MCF 10A (cell line): ENCODE measurements at regions of chr20 and their contacts with region 1.

Region 1: DNA sequence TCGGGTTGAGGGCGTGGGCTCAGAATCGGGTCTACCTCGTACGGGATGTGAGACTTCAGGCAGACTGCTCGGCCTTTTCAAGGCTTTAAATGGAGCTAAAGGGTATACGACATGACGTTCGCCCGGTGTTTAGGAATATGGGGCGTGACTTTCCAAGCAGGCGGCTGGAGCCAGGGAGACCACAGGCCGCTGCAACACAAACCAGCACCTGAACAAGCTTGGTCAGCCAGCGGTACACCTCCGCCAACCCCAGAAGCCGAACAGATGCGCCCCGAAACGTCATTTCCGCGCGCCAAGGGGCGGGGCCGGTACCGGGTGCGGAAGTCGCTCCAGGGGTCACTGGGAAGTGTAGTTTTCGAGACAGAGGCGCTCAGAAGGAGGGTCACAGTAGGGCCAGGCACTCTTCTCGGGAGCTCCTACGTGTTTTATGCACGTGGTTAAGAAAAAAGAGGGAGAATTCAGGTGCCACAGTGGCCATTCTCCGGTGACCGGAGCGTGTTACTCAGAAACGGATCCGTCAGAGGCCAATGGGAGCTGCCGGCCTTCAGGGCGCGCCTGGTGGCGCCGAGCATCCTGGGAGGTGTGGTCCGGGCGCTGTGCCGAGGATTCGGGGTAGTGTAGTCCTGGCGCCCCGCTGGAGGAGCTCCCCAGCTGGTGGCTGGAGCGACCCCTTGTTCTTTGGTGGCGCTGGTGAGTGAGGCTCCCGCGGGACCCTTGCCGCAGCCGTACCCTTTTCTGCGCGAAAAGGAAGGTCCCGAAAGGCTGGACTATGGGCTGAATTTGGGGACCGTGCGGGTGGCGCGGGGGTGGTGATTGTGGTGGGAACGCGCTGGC is at the start of gene ZNF133:
- DNase-seq: peak; percentile 94
- H3K4me3 Mint-ChIP-seq: peak within 1 kb of the TSS; percentile 100
- H3K27ac Mint-ChIP-seq: peak within 1 kb of the TSS; percentile 98
- H3K4me1 Mint-ChIP-seq: peaks cover 35% of the 10 kb centered on the region
- H3K27me3 Mint-ChIP-seq: no peaks in the 10 kb centered on the region
- CTCF ChIP-seq: no peak
- total RNA-seq, gene ZNF133: 25.3 and 30.4 TPM in 2 replicates

Region 2: DNA sequence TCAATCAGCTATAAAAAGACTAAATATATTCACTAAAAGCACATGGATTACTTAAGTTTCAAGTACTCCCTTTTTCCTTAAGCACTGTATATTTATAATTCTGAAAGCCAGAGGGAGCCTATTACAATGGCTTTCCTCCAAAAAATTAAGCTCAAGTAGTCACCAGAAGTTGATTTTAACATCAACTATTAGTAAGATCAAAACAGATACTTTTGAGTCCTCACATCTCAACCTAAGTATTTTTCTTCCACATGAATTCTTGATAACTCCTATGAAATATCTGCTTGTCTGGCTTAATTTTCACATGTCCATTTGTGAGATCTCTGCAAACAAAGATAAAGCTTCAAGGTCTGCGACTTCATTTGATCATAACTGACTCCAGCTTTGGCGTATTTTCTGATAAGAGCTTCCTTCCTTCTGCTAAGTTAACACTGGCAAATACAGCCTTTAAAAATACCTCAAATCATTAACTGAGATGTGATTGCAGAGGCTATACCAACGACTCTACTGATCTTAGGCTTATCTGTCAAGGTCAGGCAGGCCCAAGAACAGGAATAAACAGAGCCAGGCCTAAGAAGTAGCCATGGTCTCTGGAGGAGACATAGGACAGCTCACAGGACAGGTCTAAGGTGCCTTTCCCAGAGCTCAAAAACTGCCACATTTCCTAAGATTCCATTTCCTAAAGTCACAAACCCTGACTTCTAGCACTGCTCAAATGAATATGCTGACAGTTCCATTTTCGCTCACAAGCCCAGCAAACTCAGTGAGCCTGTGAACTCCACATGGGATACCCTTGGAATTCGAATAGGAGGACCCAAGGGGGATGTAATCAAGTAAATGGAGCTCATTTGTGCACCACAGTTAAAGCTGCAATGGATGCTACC is 329.5 kb before region 1 on chr20:
- CTCF ChIA-PET with region 1: interaction called, 3 read pairs
- POLR2A ChIA-PET with region 1: interaction called, 11 read pairs
- intact Hi-C with region 1: no loop called
- DNase-seq: no peak
- H3K4me3 Mint-ChIP-seq: no peak overlapping the region
- H3K27ac Mint-ChIP-seq: peak overlapping the region; percentile 82
- H3K4me1 Mint-ChIP-seq: peaks cover 33% of the 10 kb centered on the region
- H3K27me3 Mint-ChIP-seq: no peaks in the 10 kb centered on the region
- CTCF ChIP-seq: no peak

Region 3: DNA sequence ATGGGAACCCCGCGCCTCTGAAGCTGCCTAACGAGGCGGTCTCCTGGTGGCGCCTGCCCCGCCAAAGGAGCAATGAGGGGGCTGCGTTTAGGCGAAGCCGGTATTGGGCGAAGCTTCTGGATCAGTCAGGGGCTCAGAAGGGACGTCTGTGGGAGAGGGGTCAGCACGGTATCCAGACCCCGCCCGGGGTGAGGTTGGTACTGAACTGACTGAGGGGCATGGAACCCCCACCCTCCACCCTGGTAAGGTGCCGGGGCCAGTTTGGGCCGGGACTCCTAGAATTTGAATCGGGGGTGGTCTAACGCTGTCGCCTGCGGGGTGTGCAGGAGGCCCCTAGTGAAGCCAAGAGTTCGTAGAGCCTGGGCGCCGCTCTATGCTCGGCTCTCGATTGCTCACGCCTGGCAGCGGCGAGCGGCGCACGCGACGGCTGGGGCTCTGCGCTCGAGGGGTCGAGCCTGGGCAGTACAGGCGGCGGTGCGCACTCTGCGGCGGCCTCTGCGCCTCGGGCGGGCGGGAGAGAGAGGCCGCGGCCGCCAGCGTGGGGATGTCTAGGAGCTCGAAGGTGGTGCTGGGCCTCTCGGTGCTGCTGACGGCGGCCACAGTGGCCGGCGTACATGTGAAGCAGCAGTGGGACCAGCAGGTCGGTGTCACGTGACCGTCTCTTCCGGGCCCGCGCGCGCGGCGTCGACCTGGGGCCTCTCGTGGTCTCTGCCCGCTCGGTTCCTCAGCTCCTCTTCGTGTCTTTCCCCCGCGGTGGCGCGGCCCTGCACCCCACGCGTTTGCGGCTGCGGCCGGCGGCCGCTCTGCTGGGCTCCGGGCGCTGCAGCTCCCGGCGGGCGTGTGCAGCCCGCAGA is 150.5 kb before region 1 on chr20 and contains the starts of genes KAT14 and PET117:
- CTCF ChIA-PET with region 1: interaction called, 4 read pairs
- POLR2A ChIA-PET with region 1: interaction called, 34 read pairs
- intact Hi-C with region 1: no loop called
- DNase-seq: peak; percentile 87
- H3K4me3 Mint-ChIP-seq: peak within 1 kb of the TSS; percentile 81
- H3K27ac Mint-ChIP-seq: peak within 1 kb of the TSS; percentile 21
- H3K4me1 Mint-ChIP-seq: peaks cover 24% of the 10 kb centered on the region
- H3K27me3 Mint-ChIP-seq: no peaks in the 10 kb centered on the region
- CTCF ChIP-seq: no peak
- total RNA-seq, gene KAT14: 15.5 and 16.4 TPM in 2 replicates
- total RNA-seq, gene PET117: 11.9 and 14.8 TPM in 2 replicates

Region 4: GRCh38 chr20:18252597-18253451 is 35.3 kb before region 1 on chr20:
- CTCF ChIA-PET with region 1: interaction called, 3 read pairs
- POLR2A ChIA-PET with region 1: interaction called, 43 read pairs
- intact Hi-C with region 1: no loop called
- DNase-seq: peak; percentile 91
- H3K4me3 Mint-ChIP-seq: peak overlapping the region; percentile 52
- H3K27ac Mint-ChIP-seq: peak overlapping the region; percentile 100
- H3K4me1 Mint-ChIP-seq: peaks cover 30% of the 10 kb centered on the region
- H3K27me3 Mint-ChIP-seq: no peaks in the 10 kb centered on the region
- CTCF ChIP-seq: no peak

Region 5: GRCh38 chr20:18314786-18315406 is 26.8 kb after region 1 on chr20:
- CTCF ChIA-PET with region 1: interaction called, 4 read pairs
- POLR2A ChIA-PET with region 1: interaction called, 41 read pairs
- intact Hi-C with region 1: no loop called
- DNase-seq: peak; percentile 91
- H3K4me3 Mint-ChIP-seq: no peak overlapping the region
- H3K27ac Mint-ChIP-seq: peak overlapping the region; percentile 87
- H3K4me1 Mint-ChIP-seq: peaks cover 28% of the 10 kb centered on the region
- H3K27me3 Mint-ChIP-seq: no peaks in the 10 kb centered on the region
- CTCF ChIP-seq: no peak

Region 6: DNA sequence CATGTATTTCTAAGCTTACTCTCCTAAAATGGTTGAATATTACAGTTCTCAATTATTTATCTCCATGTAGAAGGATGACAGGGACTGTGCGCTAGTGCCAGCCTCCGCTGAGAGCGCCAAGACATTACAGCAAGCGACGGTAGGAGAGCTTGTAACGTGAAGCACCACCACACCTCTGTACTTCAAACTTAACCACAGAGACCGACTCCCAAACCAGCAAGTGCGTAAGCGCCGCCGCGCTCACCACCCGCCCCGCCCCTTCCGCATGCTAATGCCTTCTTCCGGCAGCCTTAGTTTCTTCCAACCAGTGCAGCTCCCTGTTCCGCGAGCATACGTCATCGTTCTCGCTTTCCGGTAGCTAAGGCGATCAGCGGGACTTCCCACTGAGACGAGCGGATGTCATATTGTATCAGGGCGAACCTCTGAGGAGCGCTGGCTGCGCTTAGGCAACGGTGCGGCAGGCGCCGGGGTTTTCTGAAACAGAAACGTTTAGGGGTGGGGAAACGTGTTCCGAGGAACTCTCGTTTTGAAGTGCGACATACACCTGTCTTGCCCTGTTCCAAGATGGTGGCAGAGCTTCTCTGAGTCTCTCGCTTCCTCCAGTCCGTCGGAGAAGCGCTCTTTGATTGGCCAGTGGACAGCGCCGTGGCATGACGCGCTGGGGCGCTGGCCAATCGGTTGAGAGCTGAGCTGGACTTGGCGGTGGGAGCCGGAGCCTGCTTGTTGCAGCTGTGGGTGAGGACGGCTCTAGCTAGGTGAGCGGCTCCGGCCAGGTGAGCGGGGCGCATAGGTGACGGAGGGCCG is 219.3 kb after region 1 on chr20 and contains the start of gene SEC23B:
- CTCF ChIA-PET with region 1: interaction called, 4 read pairs
- POLR2A ChIA-PET with region 1: interaction called, 34 read pairs
- intact Hi-C with region 1: no loop called
- DNase-seq: peak; percentile 98
- H3K4me3 Mint-ChIP-seq: peak within 1 kb of the TSS; percentile 100
- H3K27ac Mint-ChIP-seq: peak within 1 kb of the TSS; percentile 100
- H3K4me1 Mint-ChIP-seq: peaks cover 14% of the 10 kb centered on the region
- H3K27me3 Mint-ChIP-seq: no peaks in the 10 kb centered on the region
- CTCF ChIP-seq: no peak
- total RNA-seq, gene SEC23B: 139 TPM in 2 replicates